SK-N-SH (cell line): ENCODE measurements at regions of chr22 and their contacts with region 1.

Region 1: DNA sequence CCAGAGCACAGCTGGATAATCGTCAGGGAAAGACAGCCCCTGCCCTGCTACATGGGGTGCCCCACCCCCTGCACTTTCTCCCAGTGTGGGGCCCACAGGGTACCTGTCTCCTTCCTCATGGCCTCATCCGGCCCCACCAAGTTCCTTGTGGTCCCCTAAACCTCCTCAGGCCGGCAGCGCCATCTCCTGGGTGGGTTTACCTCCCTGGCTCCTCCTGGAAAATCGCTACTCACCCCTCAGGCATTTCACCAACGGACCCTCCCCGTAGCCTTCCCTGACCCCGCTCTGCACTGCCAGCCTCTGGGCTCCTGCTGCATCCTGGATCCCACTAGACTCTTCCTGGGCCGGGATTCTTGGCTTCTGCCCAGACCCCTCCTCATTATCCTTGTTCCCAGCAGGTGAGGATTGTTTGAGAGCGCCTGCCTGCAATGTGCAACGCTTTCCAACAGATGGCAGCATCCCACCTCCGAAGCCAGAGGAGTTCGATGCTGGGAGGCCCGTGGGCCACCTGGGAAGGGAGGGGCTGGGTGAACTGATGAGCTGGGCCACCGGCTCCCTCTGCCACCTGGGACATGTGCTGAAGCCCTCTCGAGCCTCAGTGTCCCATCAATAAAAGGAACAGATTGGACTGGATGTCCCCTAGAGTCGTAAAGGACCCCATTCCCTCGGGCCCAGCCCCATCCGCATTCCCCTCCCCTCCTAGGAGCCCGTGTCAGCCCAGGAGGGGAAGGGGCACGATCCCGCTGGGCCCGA is 44.2 kb upstream of the TTLL12 start:
- DNase-seq: peak; percentile 79
- H3K4me3 ChIP-seq: peak overlapping the region in 1 of 2 experiments; percentile 54; a peak in 1 of 4 replicates
- H3K27ac ChIP-seq: peak overlapping the region in 1 of 2 experiments; percentile 25; a peak in 1 of 4 replicates
- H3K4me1 ChIP-seq: peaks cover 0 to 37% of the 10 kb centered on the region in 2 experiments; a peak in 1 of 4 replicates
- H3K27me3 ChIP-seq: no peaks in the 10 kb centered on the region
- CTCF ChIP-seq: peak; percentile 69
- EP300 ChIP-seq: no peak
- RAD21 ChIP-seq: peak; percentile 83

Region 2: GRCh38 chr22:43197271-43197941 is 33.7 kb before region 1 on chr22:
- CTCF ChIA-PET with region 1: no interaction called
- POLR2A ChIA-PET with region 1: no interaction called
- DNase-seq: no peak
- H3K4me3 ChIP-seq: no peak overlapping the region
- H3K27ac ChIP-seq: no peak overlapping the region; a peak in 1 of 4 replicates
- H3K4me1 ChIP-seq: no peaks in the 10 kb centered on the region; a peak in 1 of 4 replicates
- H3K27me3 ChIP-seq: no peaks in the 10 kb centered on the region
- CTCF ChIP-seq: no peak
- EP300 ChIP-seq: no peak
- RAD21 ChIP-seq: no peak

Region 3: GRCh38 chr22:43210631-43211515 is 20.3 kb before region 1 on chr22:
- CTCF ChIA-PET with region 1: no interaction called
- POLR2A ChIA-PET with region 1: no interaction called
- DNase-seq: no peak
- H3K4me3 ChIP-seq: no peak overlapping the region
- H3K27ac ChIP-seq: no peak overlapping the region
- H3K4me1 ChIP-seq: no peaks in the 10 kb centered on the region
- H3K27me3 ChIP-seq: no peaks in the 10 kb centered on the region
- CTCF ChIP-seq: no peak
- EP300 ChIP-seq: no peak
- RAD21 ChIP-seq: no peak

Region 4: GRCh38 chr22:43263645-43264514 is 32.7 kb after region 1 on chr22:
- CTCF ChIA-PET with region 1: interaction called, 69 read pairs
- POLR2A ChIA-PET with region 1: interaction called, 6 read pairs
- DNase-seq: peak; percentile 66
- H3K4me3 ChIP-seq: no peak overlapping the region
- H3K27ac ChIP-seq: peak overlapping the region in 1 of 2 experiments; percentile 85; a peak in 2 of 4 replicates
- H3K4me1 ChIP-seq: peaks cover 0 to 64% of the 10 kb centered on the region in 2 experiments; a peak in 2 of 4 replicates
- H3K27me3 ChIP-seq: no peaks in the 10 kb centered on the region
- CTCF ChIP-seq: no peak
- EP300 ChIP-seq: no peak
- RAD21 ChIP-seq: no peak

Region 5: DNA sequence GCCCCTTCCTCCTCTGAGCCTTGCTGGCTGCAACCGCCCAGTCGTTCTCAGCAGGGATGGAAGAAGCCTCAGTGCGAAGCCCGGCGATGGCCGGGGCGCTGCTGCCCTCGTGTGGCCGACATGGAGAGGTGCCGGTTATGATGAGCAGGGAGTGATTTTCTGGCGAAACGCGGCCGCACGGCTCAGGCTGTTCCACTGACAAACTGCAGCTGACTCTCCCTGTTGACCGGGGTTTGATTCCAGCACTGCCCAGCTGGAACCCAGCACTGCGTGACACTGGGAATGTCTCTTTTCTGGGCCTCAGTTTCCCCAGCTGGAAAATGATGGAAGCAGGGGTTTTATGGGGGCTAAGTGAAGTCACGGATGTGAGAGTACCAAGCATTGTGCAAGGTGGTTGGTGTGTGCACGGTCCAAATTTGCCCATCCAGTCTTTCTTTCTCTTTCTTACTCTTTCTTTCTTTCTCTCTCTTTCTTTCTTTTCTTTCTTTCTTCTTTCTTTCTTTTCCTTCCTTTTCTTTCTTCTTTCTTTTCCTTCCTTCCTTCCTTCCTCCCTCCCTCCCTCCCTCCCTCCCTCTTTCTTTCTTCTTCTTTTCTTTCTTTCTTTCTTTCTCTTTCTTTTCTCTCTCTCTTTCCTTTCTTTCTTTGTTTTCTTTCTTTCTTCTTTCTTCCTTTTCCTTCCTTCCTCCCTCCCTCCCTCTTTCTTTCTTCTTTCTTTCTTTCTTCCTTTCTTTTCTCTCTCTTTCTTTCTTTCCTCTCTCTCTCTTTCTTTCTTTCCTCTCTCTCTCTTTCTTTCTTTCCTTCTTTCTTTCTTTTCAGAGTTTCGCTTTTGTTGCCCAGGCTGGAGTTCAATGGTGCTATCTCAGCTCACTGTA is 154.9 kb after region 1 on chr22:
- CTCF ChIA-PET with region 1: interaction called, 25 read pairs
- POLR2A ChIA-PET with region 1: no interaction called
- DNase-seq: peak; percentile 80
- H3K4me3 ChIP-seq: peak overlapping the region in 1 of 2 experiments; percentile 55; a peak in 2 of 4 replicates
- H3K27ac ChIP-seq: no peak overlapping the region
- H3K4me1 ChIP-seq: no peaks in the 10 kb centered on the region; a peak in 1 of 4 replicates
- H3K27me3 ChIP-seq: no peaks in the 10 kb centered on the region
- CTCF ChIP-seq: peak; percentile 64
- EP300 ChIP-seq: no peak
- RAD21 ChIP-seq: peak; percentile 90

Region 6: GRCh38 chr22:43670513-43670912 is 439.4 kb after region 1 on chr22:
- CTCF ChIA-PET with region 1: no interaction called
- POLR2A ChIA-PET with region 1: no interaction called
- DNase-seq: no peak
- H3K4me3 ChIP-seq: no peak overlapping the region
- H3K27ac ChIP-seq: no peak overlapping the region
- H3K4me1 ChIP-seq: no peaks in the 10 kb centered on the region
- H3K27me3 ChIP-seq: no peaks in the 10 kb centered on the region
- CTCF ChIP-seq: no peak
- EP300 ChIP-seq: no peak
- RAD21 ChIP-seq: no peak